ENCODE measurements at regions of chr13 and their contacts with region 1.

Region 1: DNA sequence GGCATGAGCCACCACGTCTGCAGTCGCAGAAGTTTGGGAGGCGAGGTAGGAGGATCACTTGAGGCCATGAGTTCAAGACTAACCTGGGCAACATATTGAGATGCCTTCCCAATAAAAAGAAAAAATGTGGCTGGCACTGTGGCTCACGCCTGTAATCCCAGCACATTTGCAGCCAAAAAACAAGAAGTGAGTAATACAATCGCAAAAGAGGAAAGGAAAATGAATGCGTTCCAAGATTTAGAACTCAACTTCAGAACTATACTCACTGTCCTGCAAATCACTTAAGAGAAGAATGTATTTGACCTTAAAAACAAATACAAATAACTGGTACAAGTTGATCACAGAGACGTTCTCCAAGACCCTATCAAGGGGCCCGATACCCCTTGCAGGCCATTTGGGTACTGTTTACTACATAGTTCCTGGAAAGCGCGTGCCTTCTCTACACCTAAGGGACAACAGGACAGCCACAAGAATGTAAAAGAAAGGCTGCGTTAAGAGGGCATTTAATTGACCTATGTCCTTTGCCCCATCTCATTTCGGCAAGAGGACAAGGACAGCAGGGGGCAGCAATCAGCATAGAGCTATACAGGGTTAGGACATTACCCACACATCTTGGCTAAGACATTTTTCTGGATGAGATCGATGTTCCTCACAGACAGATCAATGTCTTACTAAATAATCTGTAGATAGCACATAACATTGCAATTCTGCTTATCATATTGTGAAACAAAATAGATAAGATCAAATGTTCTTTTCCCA is 41.3 kb downstream of the FLT3 start:
- DNase-seq: peak; percentile 48
- ATAC-seq: peak; percentile 82
- H3K4me3 ChIP-seq: no peak overlapping the region
- H3K27ac ChIP-seq: no peak overlapping the region
- H3K4me1 ChIP-seq: no peaks in the 10 kb centered on the region
- H3K27me3 ChIP-seq: peaks cover 1 to 12% of the 10 kb centered on the region in 2 experiments; a peak in 4 of 5 replicates
- CTCF ChIP-seq: peak; percentile 68
- EP300 ChIP-seq: no peak
- POLR2A ChIP-seq: no peak
- RAD21 ChIP-seq: no peak

Region 2: GRCh38 chr13:28047757-28048388 is 11.2 kb before region 1 on chr13:
- CTCF ChIA-PET with region 1: no interaction called
- POLR2A ChIA-PET with region 1: no interaction called
- in situ Hi-C with region 1: no loop called
- intact Hi-C with region 1: no loop called
- DNase-seq: no peak
- ATAC-seq: no peak
- H3K4me3 ChIP-seq: no peak overlapping the region
- H3K27ac ChIP-seq: no peak overlapping the region
- H3K4me1 ChIP-seq: no peaks in the 10 kb centered on the region
- H3K27me3 ChIP-seq: no peaks in the 10 kb centered on the region
- CTCF ChIP-seq: no peak
- EP300 ChIP-seq: no peak
- POLR2A ChIP-seq: no peak
- RAD21 ChIP-seq: no peak

Region 3: GRCh38 chr13:28273919-28274318 is 214.9 kb after region 1 on chr13:
- CTCF ChIA-PET with region 1: no interaction called
- POLR2A ChIA-PET with region 1: no interaction called
- in situ Hi-C with region 1: no loop called
- intact Hi-C with region 1: loop called (anchors 1 kb)
- DNase-seq: no peak
- ATAC-seq: no peak
- H3K4me3 ChIP-seq: no peak overlapping the region
- H3K27ac ChIP-seq: no peak overlapping the region
- H3K4me1 ChIP-seq: no peaks in the 10 kb centered on the region
- H3K27me3 ChIP-seq: no peaks in the 10 kb centered on the region
- CTCF ChIP-seq: 0 out of 2 replicates have a peak, but pooled peaks have one; percentile 18
- EP300 ChIP-seq: no peak
- POLR2A ChIP-seq: no peak
- RAD21 ChIP-seq: no peak

Region 4: GRCh38 chr13:28636674-28637317 is 577.8 kb after region 1 on chr13:
- CTCF ChIA-PET with region 1: no interaction called
- POLR2A ChIA-PET with region 1: no interaction called
- in situ Hi-C with region 1: loop called (anchors 25 kb)
- intact Hi-C with region 1: no loop called
- DNase-seq: peak; percentile 58
- ATAC-seq: peak; percentile 94
- H3K4me3 ChIP-seq: no peak overlapping the region
- H3K27ac ChIP-seq: no peak overlapping the region
- H3K4me1 ChIP-seq: peaks cover 21% of the 10 kb centered on the region
- H3K27me3 ChIP-seq: no peaks in the 10 kb centered on the region
- CTCF ChIP-seq: peak; percentile 78
- EP300 ChIP-seq: no peak
- POLR2A ChIP-seq: no peak
- RAD21 ChIP-seq: peak; percentile 53; the same call in 1 of the 2 replicates